AG04450 (cell line): ENCODE measurements at regions of chr15 and their contacts with region 1.

Region 1: GRCh38 chr15:88657326-88658069 is 18.7 kb downstream of the ISG20 start:
- DNase-seq: no peak
- H3K4me3 ChIP-seq: no peak overlapping the region
- H3K27ac ChIP-seq: no peak overlapping the region
- H3K27me3 ChIP-seq: no peaks in the 10 kb centered on the region
- CTCF ChIP-seq: peak; percentile 89

Region 2: GRCh38 chr15:88897456-88898194 is 240.1 kb after region 1 on chr15:
- CTCF ChIA-PET with region 1: interaction called, 15 read pairs
- POLR2A ChIA-PET with region 1: interaction called, 4 read pairs
- DNase-seq: no peak
- H3K4me3 ChIP-seq: no peak overlapping the region
- H3K27ac ChIP-seq: peak overlapping the region; percentile 1
- H3K27me3 ChIP-seq: no peaks in the 10 kb centered on the region
- CTCF ChIP-seq: peak; percentile 76